Activated CD4-positive, alpha-beta memory T cell treated with anti-CD3 and anti-CD28 coated beads for 36 hours (primary cell): ENCODE measurements at regions of chr22 and their contacts with region 1.

Region 1: GRCh38 chr22:20965104-20965887 is 1.8 kb upstream of the AIFM3 start:
- DNase-seq: no peak
- H3K4me3 Mint-ChIP-seq: peak overlapping the region; percentile 20
- H3K27ac Mint-ChIP-seq: no peak overlapping the region
- H3K4me1 Mint-ChIP-seq: peaks cover 11% of the 10 kb centered on the region
- H3K27me3 Mint-ChIP-seq: peaks cover 8% of the 10 kb centered on the region

Region 2: DNA sequence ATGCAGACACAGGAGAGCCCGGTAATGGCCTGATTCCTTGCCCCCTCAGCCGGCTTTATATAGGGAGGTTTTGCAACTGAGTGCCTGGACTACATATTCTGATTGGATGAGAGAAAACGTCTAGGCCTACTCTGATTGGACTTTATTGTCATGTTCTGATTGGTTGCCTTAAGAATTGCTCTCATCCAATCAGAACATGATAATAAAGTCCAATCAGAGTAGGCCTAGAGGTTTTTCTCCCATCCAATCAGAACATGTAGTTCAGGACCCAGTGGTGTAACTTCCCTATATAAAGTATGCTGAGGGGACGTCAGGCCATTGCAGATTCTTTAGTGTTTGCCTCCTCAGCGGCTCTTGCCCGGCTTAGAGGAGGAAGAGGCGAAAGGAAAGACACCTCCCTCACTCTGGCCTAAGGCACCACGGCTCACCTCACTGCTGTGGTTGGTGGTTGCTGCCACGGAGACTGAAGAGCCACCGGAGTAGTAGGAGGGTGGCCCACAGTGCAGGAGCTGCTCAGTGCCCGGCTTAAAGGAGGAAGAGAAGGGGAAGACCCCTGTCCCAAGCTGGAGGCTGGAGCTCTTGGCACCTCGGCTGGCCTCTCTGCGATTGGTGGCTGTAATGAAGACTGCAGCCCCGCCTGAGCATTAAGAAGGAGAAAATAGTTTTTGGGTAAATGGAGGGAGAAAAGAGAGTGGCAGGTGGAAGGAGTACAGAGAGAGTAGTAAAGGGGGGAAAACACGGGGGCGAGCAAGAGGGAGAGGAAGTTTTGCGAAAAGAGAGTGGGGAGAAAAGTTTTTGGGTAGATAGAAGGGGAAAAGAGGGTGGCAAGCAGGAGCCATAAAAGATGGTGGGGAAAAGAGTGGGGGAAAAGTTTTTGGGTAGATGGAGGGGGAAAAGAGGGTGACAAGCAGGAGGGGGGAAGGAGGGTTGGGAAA is 308.1 kb before region 1 on chr22:
- CTCF ChIA-PET with region 1: no interaction called
- POLR2A ChIA-PET with region 1: no interaction called
- intact Hi-C with region 1: no loop called
- DNase-seq: no peak
- H3K4me3 Mint-ChIP-seq: no peak overlapping the region
- H3K27ac Mint-ChIP-seq: no peak overlapping the region
- H3K4me1 Mint-ChIP-seq: no peaks in the 10 kb centered on the region
- H3K27me3 Mint-ChIP-seq: peaks cover 16% of the 10 kb centered on the region

Region 3: GRCh38 chr22:20946080-20946986 is 19.0 kb before region 1 on chr22:
- CTCF ChIA-PET with region 1: interaction called, 13 read pairs
- POLR2A ChIA-PET with region 1: interaction called, 3 read pairs
- intact Hi-C with region 1: no loop called
- DNase-seq: no peak
- H3K4me3 Mint-ChIP-seq: no peak overlapping the region
- H3K27ac Mint-ChIP-seq: no peak overlapping the region
- H3K4me1 Mint-ChIP-seq: peaks cover 60% of the 10 kb centered on the region
- H3K27me3 Mint-ChIP-seq: no peaks in the 10 kb centered on the region

Region 4: GRCh38 chr22:21045585-21046294 is 80.4 kb after region 1 on chr22 and contains the start of gene LRRC74B:
- CTCF ChIA-PET with region 1: no interaction called
- POLR2A ChIA-PET with region 1: no interaction called
- intact Hi-C with region 1: loop called (anchors 5 kb)
- DNase-seq: peak; percentile 83
- H3K4me3 Mint-ChIP-seq: peak within 1 kb of the TSS; percentile 68
- H3K27ac Mint-ChIP-seq: peak within 1 kb of the TSS; percentile 46
- H3K4me1 Mint-ChIP-seq: peaks cover 21% of the 10 kb centered on the region
- H3K27me3 Mint-ChIP-seq: peaks cover 13% of the 10 kb centered on the region
- total RNA-seq, gene LRRC74B: not detected

Region 5: DNA sequence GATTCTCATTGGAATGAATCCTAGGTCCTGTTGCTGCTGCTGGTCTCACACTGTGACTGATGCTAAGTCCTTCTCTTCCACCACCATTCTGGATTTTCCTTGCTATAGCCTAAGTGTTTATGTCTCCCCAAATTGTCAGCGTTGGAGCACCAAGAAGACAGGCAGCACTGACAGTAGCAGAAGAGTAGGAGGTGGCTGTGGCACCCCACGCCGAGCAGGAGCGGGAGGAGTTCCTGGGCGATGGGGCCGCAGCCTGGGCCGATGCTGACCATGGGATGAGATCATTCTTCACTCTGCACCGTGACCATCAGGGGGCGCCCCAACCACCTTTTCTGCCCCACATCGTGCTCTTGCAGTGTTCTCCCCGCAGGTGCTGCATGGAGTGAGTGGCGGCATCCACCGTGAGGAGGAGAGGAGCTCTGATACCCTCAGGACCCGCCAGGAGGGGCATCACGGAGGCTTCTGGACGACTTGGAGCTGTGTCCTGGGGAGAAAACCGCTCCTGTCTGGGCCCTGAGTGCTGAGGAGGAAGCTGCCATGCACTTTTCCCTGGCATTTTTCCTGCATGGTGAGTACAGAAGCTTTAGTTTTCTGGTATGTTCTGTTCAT is 137.5 kb after region 1 on chr22:
- CTCF ChIA-PET with region 1: interaction called, 7 read pairs
- POLR2A ChIA-PET with region 1: no interaction called
- intact Hi-C with region 1: loop called (anchors 10 kb)
- DNase-seq: peak; percentile 88
- H3K4me3 Mint-ChIP-seq: no peak overlapping the region
- H3K27ac Mint-ChIP-seq: no peak overlapping the region
- H3K4me1 Mint-ChIP-seq: peaks cover 7% of the 10 kb centered on the region
- H3K27me3 Mint-ChIP-seq: peaks cover 16% of the 10 kb centered on the region